PC-3 (cell line): ENCODE measurements at regions of chr12 and their contacts with region 1.

Region 1: GRCh38 chr12:26548227-26548626 is 284.8 kb downstream of the ITPR2 start:
- DNase-seq: no peak
- ATAC-seq: no peak
- H3K4me3 ChIP-seq: no peak overlapping the region
- H3K27ac ChIP-seq: no peak overlapping the region
- H3K4me1 ChIP-seq: no peaks in the 10 kb centered on the region
- H3K27me3 ChIP-seq: no peaks in the 10 kb centered on the region
- CTCF ChIP-seq: no peak

Region 2: DNA sequence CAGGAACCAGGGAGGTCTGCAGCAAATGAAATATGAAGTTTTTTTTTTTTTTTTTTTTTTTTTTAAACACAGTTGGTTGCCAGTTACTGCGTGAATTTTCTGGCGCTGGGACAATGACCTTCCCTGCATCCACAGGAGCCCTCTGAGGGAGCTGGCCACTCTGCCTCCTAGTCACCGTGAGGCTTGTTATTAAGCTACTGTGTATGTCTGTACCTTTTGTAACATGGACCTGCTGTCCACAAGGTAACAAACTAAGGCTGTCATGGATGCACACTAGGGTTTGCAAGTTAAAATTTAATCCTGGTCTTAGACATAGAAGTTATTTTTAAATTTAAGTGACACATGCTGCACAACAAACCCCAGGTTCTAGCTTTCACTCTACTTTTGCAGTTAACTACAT is 141.8 kb before region 1 on chr12:
- CTCF ChIA-PET with region 1: no interaction called
- POLR2A ChIA-PET with region 1: no interaction called
- intact Hi-C with region 1: no loop called
- DNase-seq: no peak
- ATAC-seq: no peak
- H3K4me3 ChIP-seq: no peak overlapping the region
- H3K27ac ChIP-seq: no peak overlapping the region
- H3K4me1 ChIP-seq: peaks cover 27% of the 10 kb centered on the region
- H3K27me3 ChIP-seq: no peaks in the 10 kb centered on the region
- CTCF ChIP-seq: no peak

Region 3: GRCh38 chr12:26608706-26609105 is 60.5 kb after region 1 on chr12:
- CTCF ChIA-PET with region 1: no interaction called
- POLR2A ChIA-PET with region 1: no interaction called
- intact Hi-C with region 1: loop called (anchors 10 kb)
- DNase-seq: no peak
- ATAC-seq: no peak
- H3K4me3 ChIP-seq: no peak overlapping the region
- H3K27ac ChIP-seq: no peak overlapping the region
- H3K4me1 ChIP-seq: no peaks in the 10 kb centered on the region
- H3K27me3 ChIP-seq: no peaks in the 10 kb centered on the region
- CTCF ChIP-seq: no peak

Region 4: DNA sequence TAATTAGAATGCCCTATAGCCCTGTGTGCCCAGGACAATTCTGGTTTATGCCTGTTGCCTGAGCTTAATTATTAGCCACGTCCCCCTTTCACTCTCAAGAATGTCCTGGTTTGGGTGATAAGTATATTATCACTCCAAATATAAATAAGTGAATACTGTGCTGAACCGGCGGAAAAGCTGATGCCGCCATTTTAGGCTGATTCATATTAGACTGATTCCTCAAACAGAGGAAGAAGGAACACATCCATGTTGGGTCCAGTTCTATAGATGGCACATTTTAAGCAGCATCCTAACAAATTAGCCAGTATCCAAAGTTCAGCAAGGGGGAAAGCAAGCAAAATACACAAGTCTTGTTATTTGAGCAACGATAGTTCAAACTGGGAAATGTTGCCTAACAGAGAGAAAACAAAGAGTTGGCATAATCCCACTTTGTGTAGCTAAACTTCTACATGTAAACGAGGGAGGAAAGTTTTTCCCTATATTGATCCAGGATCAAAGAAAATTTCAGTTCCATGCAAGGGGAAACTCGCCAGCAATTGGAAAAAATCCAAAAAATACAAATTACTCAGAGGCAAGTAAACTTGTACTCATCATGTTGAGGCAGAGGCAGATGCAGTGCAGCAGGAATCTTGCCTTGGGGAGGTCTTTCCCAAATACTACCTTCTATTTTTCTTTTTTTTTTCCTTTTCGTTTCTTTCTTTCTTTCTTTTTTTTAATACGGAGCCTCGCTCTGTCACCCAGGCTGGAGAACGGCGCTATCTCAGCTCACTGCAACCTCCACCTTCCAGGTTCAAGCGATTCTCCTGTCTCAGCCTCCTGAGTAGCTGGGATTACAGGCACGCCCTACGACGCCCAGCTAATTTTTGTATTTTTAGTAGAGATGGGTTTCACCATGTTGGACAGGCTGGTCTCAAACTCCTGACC is 188.6 kb after region 1 on chr12:
- CTCF ChIA-PET with region 1: no interaction called
- POLR2A ChIA-PET with region 1: no interaction called
- intact Hi-C with region 1: no loop called
- DNase-seq: peak; percentile 88
- ATAC-seq: peak; percentile 73
- H3K4me3 ChIP-seq: no peak overlapping the region
- H3K27ac ChIP-seq: no peak overlapping the region
- H3K4me1 ChIP-seq: peaks cover 12% of the 10 kb centered on the region
- H3K27me3 ChIP-seq: no peaks in the 10 kb centered on the region
- CTCF ChIP-seq: no peak